Activated CD4-positive, alpha-beta T cell treated with anti-CD3 and anti-CD28 coated beads, Interleukin-2, amount 10 ng/mL, durations not matched to agents 24 days and 14 days (primary cell): ENCODE measurements at regions of chr1 and their contacts with region 1.

Region 1: DNA sequence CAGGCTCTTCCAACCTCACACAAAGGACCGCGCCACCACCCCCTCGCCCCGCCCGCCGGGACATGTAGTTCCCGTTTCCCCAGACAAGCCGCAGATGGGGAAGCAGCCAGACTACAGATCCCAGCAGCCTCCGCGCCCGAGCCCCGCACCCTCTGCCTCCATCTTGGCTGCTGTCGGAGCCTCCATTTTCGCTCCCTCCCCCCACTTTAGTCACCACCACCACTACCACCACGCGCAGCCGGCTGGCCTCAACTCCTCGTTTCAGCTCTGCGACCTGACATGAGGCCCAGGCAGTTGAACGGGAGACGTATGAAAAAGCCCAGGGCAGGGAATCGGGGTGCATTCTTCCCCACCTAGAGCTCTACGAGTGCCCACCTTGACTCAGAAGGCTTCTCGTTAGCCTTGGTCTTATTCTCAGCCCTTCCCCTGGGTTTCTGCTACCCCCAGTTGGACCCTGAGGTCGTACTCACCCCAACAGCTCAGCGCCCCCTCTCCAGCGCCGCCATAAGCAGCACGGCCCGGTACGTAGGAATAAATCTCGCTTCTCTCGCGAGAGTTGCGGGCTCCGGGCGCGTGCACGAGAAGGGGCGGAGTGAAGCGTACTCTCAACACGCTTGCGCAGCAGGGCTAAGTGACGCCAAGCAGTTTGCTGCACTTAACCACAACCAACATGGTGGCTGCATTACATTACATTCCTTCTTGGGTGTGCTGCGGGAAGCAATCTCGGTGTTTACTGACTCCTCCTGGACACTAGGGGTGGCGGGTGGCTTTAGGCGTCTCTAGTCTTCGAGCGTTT is at the start of gene CSDE1:
- DNase-seq: peak; percentile 99
- H3K4me3 Mint-ChIP-seq: peak within 1 kb of the TSS; percentile 99
- H3K27ac Mint-ChIP-seq: peak within 1 kb of the TSS; percentile 100
- H3K4me1 Mint-ChIP-seq: peaks cover 45% of the 10 kb centered on the region
- H3K27me3 Mint-ChIP-seq: peaks cover 2% of the 10 kb centered on the region
- total RNA-seq, gene CSDE1: 418 and 419 TPM in 2 replicates

Region 2: DNA sequence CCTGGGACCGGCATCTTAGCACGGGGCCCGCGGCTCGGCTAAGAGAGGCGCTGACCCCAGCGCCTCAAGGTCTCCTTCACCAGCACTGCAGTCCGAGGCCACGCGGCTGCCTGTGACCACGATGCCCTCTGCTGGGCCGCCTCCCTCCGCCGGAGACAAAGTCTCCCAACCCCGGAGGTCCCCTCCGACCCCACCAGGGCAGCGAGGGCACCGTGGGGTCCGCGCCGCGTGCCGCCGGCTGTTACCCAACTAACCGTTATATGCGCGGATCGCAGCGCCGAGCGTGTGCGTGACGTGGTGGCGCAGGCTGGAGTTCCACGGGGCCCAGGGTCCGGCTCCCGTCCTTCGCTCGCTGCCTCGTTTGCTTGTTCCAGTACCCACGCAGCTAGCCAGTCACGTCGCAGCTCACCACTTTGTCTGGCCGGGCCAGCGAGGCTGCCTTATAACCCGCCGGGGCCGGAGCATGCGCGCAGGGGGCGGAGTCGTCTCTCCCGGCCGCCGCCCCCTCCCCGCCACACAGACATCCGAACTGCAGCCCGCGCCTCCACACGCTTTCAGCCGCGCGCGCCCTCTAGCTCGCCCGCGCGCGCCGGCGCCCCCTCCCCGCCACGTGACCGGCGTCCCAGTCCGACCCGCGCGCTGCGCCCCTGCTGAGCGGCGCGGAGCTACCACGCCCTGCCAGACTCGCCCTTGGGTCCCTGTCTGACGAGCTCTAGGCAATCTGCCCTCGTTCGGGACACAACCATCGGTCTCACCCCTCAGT is 1801.7 kb before region 1 on chr1 and contains the start of gene SLC16A1:
- intact Hi-C with region 1: loop called (anchors 5 kb)
- DNase-seq: peak; percentile 97
- H3K4me3 Mint-ChIP-seq: peak within 1 kb of the TSS; percentile 88
- H3K27ac Mint-ChIP-seq: peak within 1 kb of the TSS; percentile 100
- H3K4me1 Mint-ChIP-seq: peaks cover 51% of the 10 kb centered on the region
- H3K27me3 Mint-ChIP-seq: no peaks in the 10 kb centered on the region
- total RNA-seq, gene SLC16A1: 79.2 and 79.7 TPM in 2 replicates

Region 3: DNA sequence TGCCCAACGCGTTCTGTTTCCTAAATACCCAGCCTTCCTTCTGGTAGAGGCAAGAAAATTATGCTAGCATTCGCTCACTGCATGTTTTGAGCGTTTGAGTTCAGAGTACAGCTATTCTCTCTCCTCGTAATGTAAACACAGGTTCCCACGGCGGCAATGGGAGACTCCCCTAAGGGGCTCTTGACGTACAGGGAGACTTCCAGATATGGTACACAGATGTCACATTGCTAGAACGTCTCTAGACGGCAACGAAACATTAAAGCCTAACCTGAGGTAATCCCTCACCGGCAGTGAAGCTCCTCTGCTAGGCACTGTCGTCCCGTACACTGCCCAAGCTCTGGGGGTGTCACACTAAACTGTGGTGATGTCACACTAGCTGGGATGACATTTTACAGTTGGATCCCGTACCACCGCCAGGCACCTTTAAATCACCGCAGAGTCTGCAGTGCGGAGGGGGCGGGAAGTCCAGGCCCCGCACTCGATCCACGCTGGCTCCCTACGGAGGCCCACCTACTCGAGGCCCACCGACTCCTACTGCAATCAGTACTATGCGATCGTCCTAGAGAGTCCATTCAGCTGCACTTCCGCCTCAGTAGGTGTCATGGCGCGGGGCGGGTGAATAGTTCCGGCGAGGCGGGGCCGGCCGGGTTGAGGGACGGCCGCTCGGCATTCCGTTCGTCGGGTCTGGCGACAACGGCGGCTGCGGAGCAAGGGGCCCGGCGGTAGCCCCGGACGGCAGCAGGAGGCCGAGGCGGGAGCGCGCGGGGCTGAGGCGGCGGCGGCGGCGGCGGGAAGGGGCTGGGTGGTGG is 828.5 kb before region 1 on chr1 and contains the start of gene HIPK1:
- intact Hi-C with region 1: loop called (anchors 10 kb)
- DNase-seq: peak; percentile 98
- H3K4me3 Mint-ChIP-seq: peak within 1 kb of the TSS; percentile 98
- H3K27ac Mint-ChIP-seq: peak within 1 kb of the TSS; percentile 100
- H3K4me1 Mint-ChIP-seq: peaks cover 45% of the 10 kb centered on the region
- H3K27me3 Mint-ChIP-seq: peaks cover 4% of the 10 kb centered on the region
- total RNA-seq, gene HIPK1: 81.3 and 85.9 TPM in 2 replicates

Region 4: DNA sequence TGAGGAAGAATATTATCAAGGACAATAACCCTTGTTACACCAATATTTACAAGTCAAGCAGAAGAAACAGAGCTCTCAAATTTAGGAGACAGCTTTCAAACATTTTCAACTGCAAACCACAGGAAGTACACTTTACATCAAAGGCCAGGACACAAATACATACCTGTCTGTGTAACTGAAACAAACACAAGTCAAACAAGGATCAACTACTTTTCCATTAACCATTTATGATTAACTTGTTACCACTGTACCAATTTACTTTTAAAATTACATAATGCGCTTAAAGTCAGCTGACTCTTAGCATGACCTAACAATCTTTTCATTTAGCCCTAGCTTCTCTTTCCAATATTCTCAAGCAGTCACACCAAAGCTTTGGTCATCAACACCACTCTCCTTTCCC is 290.2 kb before region 1 on chr1:
- intact Hi-C with region 1: loop called (anchors 5 kb)
- DNase-seq: no peak
- H3K4me3 Mint-ChIP-seq: peak overlapping the region; percentile 52
- H3K27ac Mint-ChIP-seq: peak overlapping the region; percentile 54
- H3K4me1 Mint-ChIP-seq: peaks cover 42% of the 10 kb centered on the region
- H3K27me3 Mint-ChIP-seq: no peaks in the 10 kb centered on the region

Region 5: DNA sequence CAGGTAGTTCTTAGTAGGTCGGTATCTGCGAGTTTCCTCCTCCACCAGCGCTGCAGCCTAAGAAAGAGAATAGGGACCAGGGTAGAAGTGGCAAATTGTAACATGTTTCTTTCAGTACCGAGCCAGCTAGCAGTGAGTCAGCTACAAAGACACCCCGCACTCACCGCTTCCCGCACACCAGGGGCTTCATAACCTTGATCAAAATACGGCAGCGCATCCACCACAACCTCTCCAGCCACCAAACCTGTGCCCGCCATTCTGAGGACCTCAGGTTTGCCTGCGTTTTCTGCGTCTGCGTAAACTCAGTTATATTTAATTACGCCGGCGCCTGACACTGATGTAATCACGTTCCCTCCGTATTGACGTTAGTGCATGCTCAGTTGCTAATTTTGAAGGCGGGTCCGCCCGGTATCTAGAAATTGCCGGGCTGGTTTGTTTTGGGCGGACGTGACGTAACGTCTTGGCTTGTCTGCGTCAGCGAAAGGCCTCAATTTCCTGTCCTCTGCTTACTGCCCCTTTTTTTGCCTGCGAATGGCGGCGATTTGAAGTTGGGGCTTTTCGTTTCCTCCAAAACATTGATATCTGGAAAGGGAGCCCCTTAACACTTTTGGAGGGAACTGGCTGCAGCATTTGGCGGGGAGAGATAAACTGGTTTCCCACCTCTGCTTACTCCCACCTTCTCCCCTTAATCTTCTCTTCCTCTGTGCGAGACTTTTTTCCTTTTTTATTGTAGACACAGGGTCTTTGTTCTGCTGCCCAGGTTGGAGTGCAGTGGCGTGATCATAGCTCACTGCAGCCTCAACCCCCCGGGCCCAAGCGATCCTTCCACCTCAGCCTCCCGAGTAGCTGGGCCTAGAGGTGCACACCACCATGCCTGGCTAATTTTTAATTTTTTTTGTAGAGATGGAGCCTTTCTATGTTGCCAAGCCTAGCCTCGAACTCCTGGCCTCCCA is 176.0 kb before region 1 on chr1 and contains the start of gene BCAS2:
- intact Hi-C with region 1: loop called (anchors 1 kb)
- DNase-seq: peak; percentile 98
- H3K4me3 Mint-ChIP-seq: peak within 1 kb of the TSS; percentile 95
- H3K27ac Mint-ChIP-seq: peak within 1 kb of the TSS; percentile 93
- H3K4me1 Mint-ChIP-seq: peaks cover 19% of the 10 kb centered on the region
- H3K27me3 Mint-ChIP-seq: peaks cover 9% of the 10 kb centered on the region
- total RNA-seq, gene BCAS2: 63.5 and 64.0 TPM in 2 replicates

Region 6: GRCh38 chr1:114745291-114745690 is 12.4 kb before region 1 on chr1:
- intact Hi-C with region 1: loop called (anchors 1 kb)
- DNase-seq: no peak
- H3K4me3 Mint-ChIP-seq: no peak overlapping the region
- H3K27ac Mint-ChIP-seq: peak overlapping the region; percentile 22
- H3K4me1 Mint-ChIP-seq: peaks cover 48% of the 10 kb centered on the region
- H3K27me3 Mint-ChIP-seq: no peaks in the 10 kb centered on the region

Region 7: GRCh38 chr1:114771992-114772391 is 14.3 kb after region 1 on chr1:
- intact Hi-C with region 1: no loop called
- DNase-seq: no peak
- H3K4me3 Mint-ChIP-seq: no peak overlapping the region
- H3K27ac Mint-ChIP-seq: no peak overlapping the region
- H3K4me1 Mint-ChIP-seq: no peaks in the 10 kb centered on the region
- H3K27me3 Mint-ChIP-seq: no peaks in the 10 kb centered on the region

Region 8: DNA sequence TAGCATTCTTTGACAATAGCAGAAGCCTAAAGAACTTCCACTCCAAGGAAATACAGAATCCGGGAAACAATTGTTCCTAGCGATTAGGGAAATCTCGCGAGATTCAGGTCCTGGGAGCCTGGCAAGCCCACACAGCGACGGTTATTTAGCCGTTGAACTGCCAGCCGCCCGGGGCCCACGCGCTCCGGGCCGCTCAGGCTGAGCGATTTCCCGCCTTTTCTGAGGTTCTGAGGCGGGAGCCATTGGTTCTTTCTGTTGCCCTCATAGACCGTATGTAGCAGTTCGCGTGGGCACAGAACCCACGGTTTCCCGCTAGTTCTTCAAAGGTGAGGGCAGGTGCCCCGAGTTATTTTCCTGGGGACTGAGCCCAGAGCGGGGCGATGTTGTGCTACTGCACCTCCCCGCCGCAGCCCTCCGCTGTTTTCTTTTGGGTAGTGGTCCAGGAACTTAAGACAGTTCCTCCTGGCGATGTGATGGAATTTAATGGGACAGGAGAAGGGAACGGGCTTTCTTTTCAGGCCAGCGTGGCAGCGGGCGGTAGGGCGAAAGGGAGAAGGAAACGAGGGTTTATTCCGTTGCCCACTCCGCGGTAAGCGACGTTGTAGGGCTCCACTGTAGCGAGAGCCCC is 97.2 kb after region 1 on chr1 and contains the start of gene SYCP1:
- intact Hi-C with region 1: no loop called
- DNase-seq: no peak
- H3K4me3 Mint-ChIP-seq: peak within 1 kb of the TSS; percentile 69
- H3K27ac Mint-ChIP-seq: no peak within 1 kb of the TSS
- H3K4me1 Mint-ChIP-seq: peaks cover 6% of the 10 kb centered on the region
- H3K27me3 Mint-ChIP-seq: peaks cover 28% of the 10 kb centered on the region
- total RNA-seq, gene SYCP1: not detected in 2 replicates

Region 9: DNA sequence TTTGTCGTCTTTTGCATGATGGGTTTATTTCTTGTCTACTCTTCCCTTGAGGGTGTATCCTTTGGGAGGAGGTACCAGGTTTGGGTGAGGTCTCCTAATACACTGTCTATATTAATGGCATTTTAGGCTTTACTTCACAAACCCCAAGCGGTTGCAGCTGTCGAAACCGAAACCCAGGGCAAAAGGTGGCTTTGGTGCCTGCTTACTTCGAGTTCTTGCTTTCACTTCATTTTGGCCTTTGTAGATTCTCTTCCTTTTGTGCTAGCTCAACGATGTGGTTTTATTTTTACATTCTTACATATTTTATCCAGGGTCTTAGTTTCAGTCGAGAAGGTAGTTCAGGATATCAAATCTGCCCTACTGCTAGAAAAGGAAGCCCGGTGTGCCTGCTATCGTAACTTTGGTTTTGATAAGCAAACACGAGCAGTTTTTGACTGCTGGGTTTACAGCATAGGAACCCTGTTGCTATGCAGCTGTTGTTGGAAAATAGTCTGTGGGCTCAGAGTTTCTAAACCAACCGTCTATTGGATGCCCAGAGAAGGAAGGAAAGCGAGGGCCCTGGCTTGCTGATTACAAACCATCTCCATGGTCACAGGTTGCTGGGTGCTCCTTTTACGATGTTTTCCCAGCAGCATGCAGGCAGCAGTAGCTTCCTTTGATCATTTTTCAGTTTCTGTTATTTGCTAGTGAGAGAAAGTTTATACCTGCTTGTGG is 341.5 kb after region 1 on chr1:
- intact Hi-C with region 1: loop called (anchors 10 kb)
- DNase-seq: peak; percentile 92
- H3K4me3 Mint-ChIP-seq: peak overlapping the region; percentile 87
- H3K27ac Mint-ChIP-seq: peak overlapping the region; percentile 96
- H3K4me1 Mint-ChIP-seq: peaks cover 30% of the 10 kb centered on the region
- H3K27me3 Mint-ChIP-seq: peaks cover 23% of the 10 kb centered on the region